T-cell (primary cell): ENCODE measurements at regions of chr3 and their contacts with region 1.

Region 1: DNA sequence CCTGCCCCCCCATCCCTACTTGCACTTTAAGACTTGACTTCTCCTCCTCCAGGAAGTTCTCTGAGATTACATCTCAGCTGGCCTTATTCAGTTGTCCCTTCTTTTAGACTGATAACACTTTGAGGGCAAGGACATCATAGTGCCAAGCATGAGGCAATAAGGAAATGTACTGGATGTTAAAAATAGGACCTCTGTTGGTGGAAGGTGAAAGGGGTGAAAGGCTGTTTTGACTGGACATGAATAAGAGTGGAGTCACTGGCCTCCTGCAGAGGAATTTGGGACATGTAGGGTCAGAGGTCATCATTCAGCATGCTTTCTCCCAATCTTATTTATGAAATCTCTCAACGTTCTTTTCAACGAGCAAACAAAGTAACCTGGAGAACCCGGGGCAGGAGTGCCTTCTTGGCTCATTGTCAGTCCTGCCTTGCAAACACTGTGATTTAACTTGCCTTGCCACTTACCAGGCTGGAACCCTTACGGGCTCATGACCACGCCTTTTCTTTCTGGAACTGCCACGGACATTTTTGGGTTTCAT is 38.6 kb downstream of the TRIM71 start:
- DNase-seq: no peak
- ATAC-seq: no peak
- H3K4me3 ChIP-seq: no peak overlapping the region
- H3K4me3 Mint-ChIP-seq: no peak overlapping the region
- H3K27ac ChIP-seq: no peak overlapping the region
- H3K27ac Mint-ChIP-seq: no peak overlapping the region
- H3K4me1 ChIP-seq: no peaks in the 10 kb centered on the region
- H3K4me1 Mint-ChIP-seq: no peaks in the 10 kb centered on the region
- H3K27me3 ChIP-seq: peaks cover 0 to 6% of the 10 kb centered on the region in 2 experiments
- H3K27me3 Mint-ChIP-seq: peaks cover 6 to 7% of the 10 kb centered on the region in 2 donors

Region 2: GRCh38 chr3:31754575-31755278 is 1101.7 kb before region 1 on chr3:
- CTCF ChIA-PET with region 1: no interaction called
- POLR2A ChIA-PET with region 1: no interaction called
- DNase-seq: no peak
- ATAC-seq: no peak
- H3K4me3 ChIP-seq: no peak overlapping the region
- H3K4me3 Mint-ChIP-seq: no peak overlapping the region
- H3K27ac ChIP-seq: no peak overlapping the region
- H3K27ac Mint-ChIP-seq: no peak overlapping the region
- H3K4me1 ChIP-seq: no peaks in the 10 kb centered on the region
- H3K4me1 Mint-ChIP-seq: peaks cover 16 to 23% (median 20%) of the 10 kb centered on the region in 3 donors
- H3K27me3 ChIP-seq: no peaks in the 10 kb centered on the region
- H3K27me3 Mint-ChIP-seq: no peaks in the 10 kb centered on the region

Region 3: GRCh38 chr3:32913790-32914446 is 57.5 kb after region 1 on chr3:
- CTCF ChIA-PET with region 1: interaction called in 1 of 2 experiments, 10 read pairs
- POLR2A ChIA-PET with region 1: no interaction called
- DNase-seq: no peak
- ATAC-seq: no peak
- H3K4me3 ChIP-seq: no peak overlapping the region
- H3K4me3 Mint-ChIP-seq: no peak overlapping the region
- H3K27ac ChIP-seq: no peak overlapping the region
- H3K27ac Mint-ChIP-seq: no peak overlapping the region
- H3K4me1 ChIP-seq: no peaks in the 10 kb centered on the region
- H3K4me1 Mint-ChIP-seq: peaks cover 0 to 9% (median 8%) of the 10 kb centered on the region in 3 donors
- H3K27me3 ChIP-seq: no peaks in the 10 kb centered on the region
- H3K27me3 Mint-ChIP-seq: no peaks in the 10 kb centered on the region